Activated CD4-positive, alpha-beta memory T cell treated with anti-CD3 and anti-CD28 coated beads for 36 hours (primary cell): ENCODE measurements at regions of chr11 and their contacts with region 1.

Region 1: GRCh38 chr11:124875943-124876817 is 10.9 kb downstream of the ROBO3 start:
- DNase-seq: peak; percentile 85
- H3K4me3 Mint-ChIP-seq: peak overlapping the region; percentile 77
- H3K27ac Mint-ChIP-seq: peak overlapping the region; percentile 61
- H3K4me1 Mint-ChIP-seq: peaks cover 13% of the 10 kb centered on the region
- H3K27me3 Mint-ChIP-seq: peaks cover 15% of the 10 kb centered on the region

Region 2: GRCh38 chr11:124800226-124800929 is 75.8 kb before region 1 on chr11 and contains the start of gene MSANTD2:
- CTCF ChIA-PET with region 1: interaction called, 10 read pairs
- POLR2A ChIA-PET with region 1: interaction called, 5 read pairs
- intact Hi-C with region 1: loop called (anchors 2 kb)
- DNase-seq: peak; percentile 87
- H3K4me3 Mint-ChIP-seq: peak within 1 kb of the TSS; percentile 89
- H3K27ac Mint-ChIP-seq: peak within 1 kb of the TSS; percentile 94
- H3K4me1 Mint-ChIP-seq: peaks cover 29% of the 10 kb centered on the region
- H3K27me3 Mint-ChIP-seq: no peaks in the 10 kb centered on the region
- total RNA-seq, gene MSANTD2: 6.1 to 6.4 TPM

Region 3: DNA sequence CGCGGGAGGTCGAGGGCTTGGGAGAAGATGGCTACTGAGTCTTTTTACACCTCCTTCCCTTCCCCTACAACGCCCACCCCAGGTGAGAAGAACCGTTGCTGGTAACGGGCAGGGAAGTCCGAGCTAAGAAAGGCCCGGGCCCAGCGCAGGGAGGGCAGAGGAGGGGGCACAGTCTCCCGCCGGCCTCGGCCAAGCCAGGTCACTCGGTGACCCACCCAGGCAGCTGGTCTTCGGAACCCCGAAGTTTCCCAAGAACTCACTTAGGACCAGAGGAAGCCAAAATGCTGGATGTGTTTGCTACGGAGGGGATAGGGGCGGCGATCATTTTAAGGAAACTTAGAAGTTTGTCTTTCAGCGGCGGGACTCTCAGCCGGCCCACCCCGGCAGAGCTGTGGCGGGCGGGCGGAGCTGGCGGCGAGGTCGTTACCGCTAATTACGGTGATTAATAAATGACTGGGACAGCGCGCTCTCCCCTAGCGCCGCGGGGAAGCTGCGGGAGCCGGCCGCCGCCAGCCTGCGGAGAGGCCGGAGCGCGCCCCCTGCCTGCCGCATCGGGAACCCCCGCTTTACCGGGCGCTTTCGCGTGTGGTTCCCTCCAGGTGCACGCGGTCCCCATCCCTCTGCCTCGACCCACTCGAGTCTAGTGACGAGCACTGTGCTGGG is 10.1 kb before region 1 on chr11:
- CTCF ChIA-PET with region 1: interaction called, 30 read pairs
- POLR2A ChIA-PET with region 1: no interaction called
- intact Hi-C with region 1: no loop called
- DNase-seq: peak; percentile 68
- H3K4me3 Mint-ChIP-seq: no peak overlapping the region
- H3K27ac Mint-ChIP-seq: no peak overlapping the region
- H3K4me1 Mint-ChIP-seq: peaks cover 36% of the 10 kb centered on the region
- H3K27me3 Mint-ChIP-seq: peaks cover 77% of the 10 kb centered on the region

Region 4: DNA sequence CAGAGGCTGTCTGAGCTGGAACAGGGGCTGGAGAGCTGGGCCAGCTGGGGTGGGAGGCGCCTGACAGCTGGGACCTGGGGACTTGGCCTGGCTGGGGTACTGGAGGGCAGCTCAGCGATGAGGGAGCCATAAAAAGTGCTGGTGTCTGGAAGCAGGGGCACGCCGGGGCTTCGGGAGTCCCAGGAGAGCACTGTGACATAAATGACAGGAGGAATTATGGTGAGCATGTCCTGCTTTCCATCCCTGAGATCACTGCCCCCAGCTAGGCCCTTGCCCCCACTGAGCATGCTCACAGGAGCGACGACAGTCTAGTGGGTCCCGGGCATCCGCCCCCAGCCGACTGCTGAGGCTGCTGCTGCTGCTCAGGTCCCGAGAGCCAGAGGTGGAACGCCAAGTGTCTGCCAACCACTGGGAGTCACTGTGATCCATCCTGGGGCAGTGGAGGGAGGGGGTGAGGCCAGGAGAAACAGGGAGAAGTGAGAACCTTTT is 15.2 kb after region 1 on chr11:
- CTCF ChIA-PET with region 1: interaction called, 10 read pairs
- POLR2A ChIA-PET with region 1: no interaction called
- intact Hi-C with region 1: no loop called
- DNase-seq: no peak
- H3K4me3 Mint-ChIP-seq: no peak overlapping the region
- H3K27ac Mint-ChIP-seq: no peak overlapping the region
- H3K4me1 Mint-ChIP-seq: no peaks in the 10 kb centered on the region
- H3K27me3 Mint-ChIP-seq: peaks cover 5% of the 10 kb centered on the region

Region 5: GRCh38 chr11:124920870-124921609 is 44.9 kb after region 1 on chr11:
- CTCF ChIA-PET with region 1: interaction called, 6 read pairs
- POLR2A ChIA-PET with region 1: no interaction called
- intact Hi-C with region 1: loop called (anchors 1 kb)
- DNase-seq: peak; percentile 80
- H3K4me3 Mint-ChIP-seq: peak overlapping the region; percentile 51
- H3K27ac Mint-ChIP-seq: peak overlapping the region; percentile 43
- H3K4me1 Mint-ChIP-seq: peaks cover 11% of the 10 kb centered on the region
- H3K27me3 Mint-ChIP-seq: no peaks in the 10 kb centered on the region

Region 6: DNA sequence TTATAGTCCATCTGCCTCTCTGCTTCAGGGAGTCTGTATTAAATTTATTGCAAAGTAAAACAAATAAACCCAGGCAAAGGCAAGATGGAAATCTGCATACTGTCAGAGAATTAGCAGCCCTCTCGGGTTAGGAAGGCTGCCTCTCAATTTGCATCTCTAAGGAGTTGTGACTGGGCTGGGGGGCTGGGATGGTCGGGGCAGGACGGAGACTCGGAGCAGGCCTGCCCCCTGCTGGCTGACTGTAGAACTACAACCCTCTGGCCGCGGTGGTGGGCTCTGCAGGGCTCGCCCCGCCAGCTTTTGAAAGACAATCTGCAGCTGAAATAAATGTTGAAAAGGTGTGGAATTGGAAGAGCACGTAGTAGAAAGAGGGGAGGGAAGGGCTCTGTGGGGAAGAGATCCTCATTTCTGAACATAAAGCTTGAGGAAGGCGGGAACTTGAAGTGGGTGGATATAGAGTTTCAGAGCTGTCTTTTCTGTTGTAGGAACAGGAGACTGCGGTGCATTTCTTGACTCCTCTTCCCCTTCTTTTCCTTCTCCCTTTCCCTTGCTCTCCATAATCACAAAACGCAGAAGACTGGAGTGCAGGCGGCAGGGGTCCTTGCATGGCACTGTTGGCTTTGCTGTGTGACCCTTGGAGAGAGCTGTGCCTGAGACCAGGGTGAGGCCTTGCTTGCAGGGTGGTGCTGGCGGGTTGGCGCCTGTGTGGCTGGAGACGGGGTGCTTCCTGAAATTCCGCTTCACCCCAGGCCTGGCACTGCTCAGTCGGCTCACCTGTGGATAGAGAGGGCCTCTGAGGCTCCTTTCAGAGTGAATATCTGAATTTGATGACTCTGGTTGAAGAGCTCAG is 265.7 kb after region 1 on chr11:
- CTCF ChIA-PET with region 1: interaction called, 9 read pairs
- POLR2A ChIA-PET with region 1: no interaction called
- intact Hi-C with region 1: loop called (anchors 10 kb)
- DNase-seq: peak; percentile 62
- H3K4me3 Mint-ChIP-seq: no peak overlapping the region
- H3K27ac Mint-ChIP-seq: no peak overlapping the region
- H3K4me1 Mint-ChIP-seq: peaks cover 4% of the 10 kb centered on the region
- H3K27me3 Mint-ChIP-seq: peaks cover 21% of the 10 kb centered on the region